CD8-positive, alpha-beta T cell (primary cell): ENCODE measurements at regions of chr6 and their contacts with region 1.

Region 1: DNA sequence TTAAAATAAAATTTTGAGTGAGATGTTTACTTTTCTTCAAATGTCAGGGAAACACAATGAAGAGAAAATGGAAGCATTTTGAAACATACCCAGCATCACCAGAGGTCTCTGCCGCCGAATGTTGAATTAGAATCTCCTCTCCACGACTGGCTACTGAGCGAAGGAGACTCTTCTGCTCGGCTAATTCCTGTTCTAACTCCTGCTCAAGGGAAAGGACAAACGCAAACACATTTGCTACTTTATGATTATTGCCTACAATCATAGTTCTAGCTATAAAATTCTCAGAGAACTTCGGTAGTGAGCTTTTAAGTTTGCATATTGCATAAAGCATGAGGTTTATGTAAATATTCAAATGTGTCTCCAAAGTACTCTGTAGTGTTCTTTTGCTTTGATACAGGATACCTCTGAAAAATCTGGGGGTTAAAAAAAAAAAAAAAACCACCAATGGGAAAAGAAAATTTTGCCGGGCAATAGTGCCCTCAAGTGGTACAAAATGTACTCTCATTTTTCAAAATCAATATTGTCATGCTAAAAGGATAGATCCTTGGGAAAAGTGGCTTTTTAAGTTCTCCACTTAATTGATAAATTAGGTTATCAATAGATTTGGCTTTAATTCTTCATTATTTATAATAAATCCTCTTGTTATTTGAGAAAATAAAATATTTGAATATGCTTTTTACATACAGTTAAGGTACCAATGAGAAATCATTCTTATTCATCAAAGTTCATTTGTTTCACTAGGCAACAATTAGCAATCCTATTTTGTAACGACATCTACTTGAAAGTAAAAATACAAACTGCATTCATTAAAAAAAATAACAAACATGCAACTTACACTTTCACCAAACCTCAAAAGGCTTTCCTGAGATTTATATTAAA is 369.0 kb downstream of the SYNE1 start:
- DNase-seq: peak in 2 of 9 experiments; percentile 33 to 48
- ATAC-seq: no peak
- H3K4me3 ChIP-seq: no peak overlapping the region
- H3K4me3 Mint-ChIP-seq: no peak overlapping the region
- H3K27ac ChIP-seq: no peak overlapping the region
- H3K27ac Mint-ChIP-seq: no peak overlapping the region
- H3K4me1 ChIP-seq: no peaks in the 10 kb centered on the region
- H3K4me1 Mint-ChIP-seq: peaks cover 2% of the 10 kb centered on the region
- H3K27me3 ChIP-seq: no peaks in the 10 kb centered on the region
- H3K27me3 Mint-ChIP-seq: no peaks in the 10 kb centered on the region
- CTCF ChIP-seq: peak; percentile 88

Region 2: GRCh38 chr6:150891888-150892485 is 1376.2 kb before region 1 on chr6:
- CTCF ChIA-PET with region 1: no interaction called
- POLR2A ChIA-PET with region 1: no interaction called
- intact Hi-C with region 1: loop called in 1 of 2 experiments (anchors 2 kb)
- DNase-seq: peak; percentile 36 to 72 (median 58)
- ATAC-seq: peak; percentile 71
- H3K4me3 ChIP-seq: no peak overlapping the region
- H3K4me3 Mint-ChIP-seq: no peak overlapping the region
- H3K27ac ChIP-seq: no peak overlapping the region
- H3K27ac Mint-ChIP-seq: no peak overlapping the region
- H3K4me1 ChIP-seq: peaks cover 8% of the 10 kb centered on the region
- H3K4me1 Mint-ChIP-seq: peaks cover 15% of the 10 kb centered on the region
- H3K27me3 ChIP-seq: no peaks in the 10 kb centered on the region
- H3K27me3 Mint-ChIP-seq: no peaks in the 10 kb centered on the region
- CTCF ChIP-seq: peak; percentile 78

Region 3: DNA sequence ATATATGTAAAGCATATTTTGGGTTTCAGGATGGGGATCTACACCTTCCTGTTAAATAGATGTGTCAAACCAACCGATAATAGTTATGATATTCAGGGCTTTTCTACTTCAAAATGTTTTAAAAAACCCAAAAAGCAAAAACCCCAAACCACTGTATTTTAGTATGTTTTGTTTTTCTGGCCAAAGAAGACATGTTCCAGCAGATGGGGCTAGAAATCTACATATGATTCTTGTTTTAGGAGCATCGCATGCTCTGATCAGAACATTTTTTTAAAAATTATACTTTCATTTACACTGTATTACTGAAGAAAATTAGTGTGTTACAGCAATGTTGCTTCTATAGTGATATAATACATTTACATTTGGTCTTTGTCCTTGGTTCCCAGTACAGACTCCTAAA is 827.3 kb before region 1 on chr6:
- CTCF ChIA-PET with region 1: interaction called, 3 read pairs
- POLR2A ChIA-PET with region 1: no interaction called
- intact Hi-C with region 1: loop called (anchors 2 to 10 kb)
- DNase-seq: peak in 2 of 9 experiments; percentile 55 to 67
- ATAC-seq: peak; percentile 52
- H3K4me3 ChIP-seq: no peak overlapping the region
- H3K4me3 Mint-ChIP-seq: no peak overlapping the region
- H3K27ac ChIP-seq: peak overlapping the region in 1 of 2 experiments; percentile 23
- H3K27ac Mint-ChIP-seq: no peak overlapping the region
- H3K4me1 ChIP-seq: peaks cover 16% of the 10 kb centered on the region
- H3K4me1 Mint-ChIP-seq: peaks cover 47% of the 10 kb centered on the region
- H3K27me3 ChIP-seq: no peaks in the 10 kb centered on the region
- H3K27me3 Mint-ChIP-seq: no peaks in the 10 kb centered on the region
- CTCF ChIP-seq: peak; percentile 69

Region 4: GRCh38 chr6:151690768-151691562 is 577.2 kb before region 1 on chr6:
- CTCF ChIA-PET with region 1: interaction called, 6 read pairs
- POLR2A ChIA-PET with region 1: no interaction called
- intact Hi-C with region 1: loop called in 1 of 2 experiments (anchors 5 kb)
- DNase-seq: peak in 2 of 9 experiments; percentile 37 to 64
- ATAC-seq: peak; percentile 74
- H3K4me3 ChIP-seq: peak overlapping the region; percentile 0 to 41
- H3K4me3 Mint-ChIP-seq: peak overlapping the region; percentile 74
- H3K27ac ChIP-seq: peak overlapping the region in 1 of 2 experiments; percentile 38
- H3K27ac Mint-ChIP-seq: peak overlapping the region; percentile 88
- H3K4me1 ChIP-seq: no peaks in the 10 kb centered on the region
- H3K4me1 Mint-ChIP-seq: peaks cover 26% of the 10 kb centered on the region
- H3K27me3 ChIP-seq: no peaks in the 10 kb centered on the region
- H3K27me3 Mint-ChIP-seq: no peaks in the 10 kb centered on the region
- CTCF ChIP-seq: no peak

Region 5: DNA sequence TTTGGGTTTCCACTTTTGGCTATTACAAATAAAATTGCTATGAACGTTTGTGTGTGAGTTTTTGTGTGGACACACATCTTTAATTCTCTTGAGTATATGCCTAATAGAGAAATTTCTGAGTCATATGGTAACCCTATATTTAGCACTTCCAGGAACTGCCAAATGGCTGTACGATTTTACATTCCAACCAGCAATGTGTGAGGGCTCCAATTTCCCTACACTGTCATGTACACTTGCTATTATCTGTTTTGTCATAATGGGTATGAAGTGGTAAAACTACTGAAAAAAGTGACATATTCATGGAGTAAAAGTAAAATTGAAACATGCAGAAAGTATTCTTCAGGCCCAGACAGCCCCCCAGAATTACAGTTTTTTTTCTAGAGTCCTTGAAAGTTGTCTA is 520.3 kb before region 1 on chr6:
- CTCF ChIA-PET with region 1: no interaction called
- POLR2A ChIA-PET with region 1: no interaction called
- intact Hi-C with region 1: no loop called
- DNase-seq: no peak
- ATAC-seq: no peak
- H3K4me3 ChIP-seq: no peak overlapping the region
- H3K4me3 Mint-ChIP-seq: no peak overlapping the region
- H3K27ac ChIP-seq: no peak overlapping the region
- H3K27ac Mint-ChIP-seq: no peak overlapping the region
- H3K4me1 ChIP-seq: no peaks in the 10 kb centered on the region
- H3K4me1 Mint-ChIP-seq: no peaks in the 10 kb centered on the region
- H3K27me3 ChIP-seq: no peaks in the 10 kb centered on the region
- H3K27me3 Mint-ChIP-seq: peaks cover 2% of the 10 kb centered on the region
- CTCF ChIP-seq: no peak

Region 6: GRCh38 chr6:152151920-152152319 is 116.3 kb before region 1 on chr6:
- CTCF ChIA-PET with region 1: interaction called, 3 read pairs
- POLR2A ChIA-PET with region 1: interaction called, 3 read pairs
- intact Hi-C with region 1: loop called in 1 of 2 experiments (anchors 10 kb)
- DNase-seq: no peak
- ATAC-seq: no peak
- H3K4me3 ChIP-seq: no peak overlapping the region
- H3K4me3 Mint-ChIP-seq: no peak overlapping the region
- H3K27ac ChIP-seq: no peak overlapping the region
- H3K27ac Mint-ChIP-seq: peak overlapping the region; percentile 37
- H3K4me1 ChIP-seq: no peaks in the 10 kb centered on the region
- H3K4me1 Mint-ChIP-seq: peaks cover 3% of the 10 kb centered on the region
- H3K27me3 ChIP-seq: no peaks in the 10 kb centered on the region
- H3K27me3 Mint-ChIP-seq: no peaks in the 10 kb centered on the region
- CTCF ChIP-seq: no peak

Region 7: GRCh38 chr6:152338335-152339125 is 70.3 kb after region 1 on chr6:
- CTCF ChIA-PET with region 1: interaction called, 16 read pairs
- POLR2A ChIA-PET with region 1: no interaction called
- intact Hi-C with region 1: loop called in 1 of 2 experiments (anchors 2 kb)
- DNase-seq: peak; percentile 25 to 78 (median 63)
- ATAC-seq: peak; percentile 90
- H3K4me3 ChIP-seq: no peak overlapping the region
- H3K4me3 Mint-ChIP-seq: no peak overlapping the region
- H3K27ac ChIP-seq: no peak overlapping the region
- H3K27ac Mint-ChIP-seq: no peak overlapping the region
- H3K4me1 ChIP-seq: no peaks in the 10 kb centered on the region
- H3K4me1 Mint-ChIP-seq: no peaks in the 10 kb centered on the region
- H3K27me3 ChIP-seq: no peaks in the 10 kb centered on the region
- H3K27me3 Mint-ChIP-seq: no peaks in the 10 kb centered on the region
- CTCF ChIP-seq: peak; percentile 93